ENCODE measurements at regions of chr9 and their contacts with region 1.

Region 1: GRCh38 chr9:109574068-109574882 is 76.2 kb upstream of the PTPN3 start:
- DNase-seq: peak in 2 of 10 donors; percentile 13 to 44

Region 2: DNA sequence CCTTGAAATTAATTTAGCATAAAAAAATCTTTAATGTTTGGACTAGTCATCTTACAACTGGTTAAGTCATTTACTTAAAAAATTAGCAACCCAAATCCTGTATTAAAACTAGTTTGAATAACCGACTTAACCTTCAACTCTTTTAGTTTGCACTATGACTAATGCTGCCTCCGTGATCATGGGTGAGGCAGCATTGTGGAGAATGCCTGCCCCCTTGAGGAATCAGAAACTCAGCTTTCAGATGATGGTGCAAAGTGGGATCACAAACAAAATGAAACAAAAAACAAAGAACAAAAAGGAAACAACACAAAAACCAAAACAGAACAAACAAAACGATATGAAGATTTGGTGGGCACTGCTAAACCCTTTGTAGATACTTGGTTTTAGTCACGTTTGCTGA is 78.7 kb after region 1 on chr9:
- intact Hi-C with region 1: loop called (anchors 2 kb)
- DNase-seq: peak in 6 of 10 donors; percentile 22 to 87 (median 40)

Region 3: DNA sequence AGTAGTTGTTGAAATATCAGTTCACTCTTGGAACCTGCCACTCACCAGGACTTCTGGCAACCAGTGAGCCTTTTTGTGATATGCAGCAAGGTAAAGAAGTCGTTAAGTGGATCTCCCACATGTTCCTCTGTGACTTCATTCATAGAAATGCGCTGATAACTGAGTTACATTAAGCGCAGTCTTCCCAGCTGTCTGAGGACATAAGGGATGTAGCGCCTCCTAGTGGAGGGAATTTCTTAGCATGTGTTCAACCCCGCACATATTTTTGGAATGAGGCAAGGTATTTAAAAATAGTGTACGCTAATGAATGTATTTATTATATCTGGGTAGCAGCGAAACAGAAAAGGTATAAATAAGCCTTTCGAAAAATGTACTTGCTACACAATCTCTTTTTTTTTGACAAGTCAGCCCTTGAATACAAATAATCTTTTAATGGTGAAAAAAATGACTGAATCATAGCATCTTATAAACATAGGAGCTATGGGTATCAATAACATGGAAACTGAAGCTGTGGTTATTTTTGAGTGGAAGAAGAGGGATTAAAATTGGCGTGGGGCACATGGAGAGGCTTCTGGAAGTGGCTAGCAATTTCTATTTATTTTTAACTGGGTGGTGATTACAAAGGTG is 243.7 kb after region 1 on chr9:
- intact Hi-C with region 1: loop called (anchors 1 kb)
- DNase-seq: peak in 3 of 10 donors; percentile 43 to 63 (median 45)

Region 4: DNA sequence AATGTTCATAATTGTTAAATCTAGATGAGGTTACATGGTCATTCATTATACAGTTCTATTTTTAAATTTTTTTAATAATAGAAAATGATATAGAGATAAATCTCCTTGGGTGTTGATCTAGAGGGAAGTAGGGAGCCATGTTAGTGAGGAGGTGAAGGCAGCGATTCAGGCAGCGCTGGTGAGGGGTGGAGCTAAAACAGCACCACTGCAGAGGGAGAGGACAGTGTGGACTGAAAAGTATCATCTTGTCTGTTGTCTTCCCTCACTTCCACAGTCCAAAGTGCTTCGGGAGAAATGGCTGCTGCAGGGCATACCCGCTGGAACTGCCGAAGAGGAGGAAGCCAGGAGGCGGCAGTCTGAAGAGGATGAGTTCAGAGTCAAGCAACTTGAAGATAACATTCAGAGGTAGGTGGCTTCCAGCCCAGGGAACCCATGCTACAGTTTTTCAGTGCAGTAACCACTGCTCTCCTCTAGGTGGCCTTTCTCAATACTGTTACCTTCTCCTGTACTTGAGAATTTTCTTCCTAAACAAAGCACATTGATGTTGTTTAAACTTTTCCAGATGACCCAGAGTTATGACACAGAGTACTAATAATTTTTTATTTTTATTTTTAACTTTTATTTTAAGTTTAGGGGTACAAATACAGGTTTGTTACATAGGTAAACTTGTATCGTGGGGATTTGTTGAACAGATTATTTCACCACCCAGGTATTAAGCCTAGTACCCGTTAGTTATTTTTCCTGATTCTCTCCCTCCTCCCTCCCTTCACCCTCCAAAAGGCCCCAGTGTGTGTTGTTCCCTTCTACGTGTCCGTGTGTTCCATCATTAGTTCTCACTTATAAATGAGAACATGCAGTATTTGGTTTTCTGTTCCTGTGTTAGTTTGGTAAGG is 306.2 kb after region 1 on chr9:
- intact Hi-C with region 1: loop called (anchors 10 kb)
- DNase-seq: no peak